ENCODE measurements at regions of chr1 and their contacts with region 1.

Region 1: GRCh38 chr1:179365320-179366092 is at the start of gene AXDND1:
- DNase-seq: peak; percentile 80 to 96 (median 90)
- ATAC-seq: peak; percentile 92
- H3K4me3 ChIP-seq: peak within 1 kb of the TSS; percentile 72 to 73
- H3K4me3 Mint-ChIP-seq: peak within 1 kb of the TSS; percentile 99
- H3K27ac ChIP-seq: peak within 1 kb of the TSS; percentile 92 to 99
- H3K27ac Mint-ChIP-seq: peak within 1 kb of the TSS; percentile 100
- H3K4me1 ChIP-seq: peaks cover 6% of the 10 kb centered on the region
- H3K4me1 Mint-ChIP-seq: peaks cover 12% of the 10 kb centered on the region
- H3K27me3 ChIP-seq: no peaks in the 10 kb centered on the region
- H3K27me3 Mint-ChIP-seq: no peaks in the 10 kb centered on the region
- CTCF ChIP-seq: no peak
- total RNA-seq, gene AXDND1: 0.98 to 1.6 TPM

Region 2: GRCh38 chr1:178542560-178543356 is 822.7 kb before region 1 on chr1:
- CTCF ChIA-PET with region 1: interaction called, 3 read pairs
- POLR2A ChIA-PET with region 1: no interaction called
- intact Hi-C with region 1: loop called (anchors 1 to 5 kb)
- DNase-seq: peak; percentile 68 to 96 (median 85)
- ATAC-seq: peak; percentile 92
- H3K4me3 ChIP-seq: peak overlapping the region; percentile 75 to 92
- H3K4me3 Mint-ChIP-seq: peak overlapping the region; percentile 90
- H3K27ac ChIP-seq: peak overlapping the region in 1 of 2 experiments; percentile 22
- H3K27ac Mint-ChIP-seq: peak overlapping the region; percentile 62
- H3K4me1 ChIP-seq: peaks cover 11% of the 10 kb centered on the region
- H3K4me1 Mint-ChIP-seq: peaks cover 9% of the 10 kb centered on the region
- H3K27me3 ChIP-seq: no peaks in the 10 kb centered on the region
- H3K27me3 Mint-ChIP-seq: no peaks in the 10 kb centered on the region
- CTCF ChIP-seq: peak; percentile 98

Region 3: GRCh38 chr1:178774263-178774662 is 591.2 kb before region 1 on chr1:
- CTCF ChIA-PET with region 1: no interaction called
- POLR2A ChIA-PET with region 1: no interaction called
- intact Hi-C with region 1: loop called in 1 of 2 experiments (anchors 2 kb)
- DNase-seq: peak in 2 of 9 experiments; percentile 19 to 38
- ATAC-seq: no peak
- H3K4me3 ChIP-seq: no peak overlapping the region
- H3K4me3 Mint-ChIP-seq: no peak overlapping the region
- H3K27ac ChIP-seq: no peak overlapping the region
- H3K27ac Mint-ChIP-seq: no peak overlapping the region
- H3K4me1 ChIP-seq: no peaks in the 10 kb centered on the region
- H3K4me1 Mint-ChIP-seq: no peaks in the 10 kb centered on the region
- H3K27me3 ChIP-seq: no peaks in the 10 kb centered on the region
- H3K27me3 Mint-ChIP-seq: no peaks in the 10 kb centered on the region
- CTCF ChIP-seq: peak; percentile 56

Region 4: GRCh38 chr1:179081687-179082332 is 283.7 kb before region 1 on chr1 and contains the start of gene TOR3A:
- CTCF ChIA-PET with region 1: interaction called, 95 read pairs
- POLR2A ChIA-PET with region 1: interaction called, 7 read pairs
- intact Hi-C with region 1: loop called (anchors 1 kb)
- DNase-seq: peak; percentile 43 to 87 (median 75)
- ATAC-seq: peak; percentile 47
- H3K4me3 ChIP-seq: peak within 1 kb of the TSS; percentile 62 to 78
- H3K4me3 Mint-ChIP-seq: peak within 1 kb of the TSS; percentile 98
- H3K27ac ChIP-seq: peak within 1 kb of the TSS; percentile 58 to 74
- H3K27ac Mint-ChIP-seq: peak within 1 kb of the TSS; percentile 97
- H3K4me1 ChIP-seq: peaks cover 20% of the 10 kb centered on the region
- H3K4me1 Mint-ChIP-seq: peaks cover 31% of the 10 kb centered on the region
- H3K27me3 ChIP-seq: no peaks in the 10 kb centered on the region
- H3K27me3 Mint-ChIP-seq: no peaks in the 10 kb centered on the region
- CTCF ChIP-seq: no peak
- total RNA-seq, gene TOR3A: 15.6 to 16.0 TPM

Region 5: DNA sequence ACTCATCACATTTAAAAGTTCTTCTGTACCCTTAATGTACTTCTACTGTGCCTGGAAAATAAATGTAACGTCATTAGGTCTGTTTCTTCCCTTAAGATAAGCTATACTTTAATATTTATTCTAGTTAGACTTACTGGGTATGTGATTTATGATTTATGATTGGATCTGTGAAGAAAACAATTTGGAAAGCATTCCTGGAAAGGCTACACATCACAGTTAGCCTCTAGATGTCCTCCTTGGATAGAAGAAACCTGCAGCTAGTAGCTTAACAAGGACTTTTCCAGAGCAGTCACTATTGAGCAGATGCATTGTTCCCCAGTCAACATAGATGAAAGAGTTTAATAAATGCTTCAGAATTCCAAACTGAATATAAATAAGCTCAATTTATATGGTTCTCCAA is 113.8 kb before region 1 on chr1:
- CTCF ChIA-PET with region 1: interaction called, 38 read pairs
- POLR2A ChIA-PET with region 1: no interaction called
- intact Hi-C with region 1: loop called (anchors 1 to 2 kb)
- DNase-seq: peak in 2 of 9 experiments; percentile 31 to 49
- ATAC-seq: no peak
- H3K4me3 ChIP-seq: no peak overlapping the region
- H3K4me3 Mint-ChIP-seq: no peak overlapping the region
- H3K27ac ChIP-seq: no peak overlapping the region
- H3K27ac Mint-ChIP-seq: no peak overlapping the region
- H3K4me1 ChIP-seq: no peaks in the 10 kb centered on the region
- H3K4me1 Mint-ChIP-seq: no peaks in the 10 kb centered on the region
- H3K27me3 ChIP-seq: no peaks in the 10 kb centered on the region
- H3K27me3 Mint-ChIP-seq: no peaks in the 10 kb centered on the region
- CTCF ChIP-seq: no peak

Region 6: DNA sequence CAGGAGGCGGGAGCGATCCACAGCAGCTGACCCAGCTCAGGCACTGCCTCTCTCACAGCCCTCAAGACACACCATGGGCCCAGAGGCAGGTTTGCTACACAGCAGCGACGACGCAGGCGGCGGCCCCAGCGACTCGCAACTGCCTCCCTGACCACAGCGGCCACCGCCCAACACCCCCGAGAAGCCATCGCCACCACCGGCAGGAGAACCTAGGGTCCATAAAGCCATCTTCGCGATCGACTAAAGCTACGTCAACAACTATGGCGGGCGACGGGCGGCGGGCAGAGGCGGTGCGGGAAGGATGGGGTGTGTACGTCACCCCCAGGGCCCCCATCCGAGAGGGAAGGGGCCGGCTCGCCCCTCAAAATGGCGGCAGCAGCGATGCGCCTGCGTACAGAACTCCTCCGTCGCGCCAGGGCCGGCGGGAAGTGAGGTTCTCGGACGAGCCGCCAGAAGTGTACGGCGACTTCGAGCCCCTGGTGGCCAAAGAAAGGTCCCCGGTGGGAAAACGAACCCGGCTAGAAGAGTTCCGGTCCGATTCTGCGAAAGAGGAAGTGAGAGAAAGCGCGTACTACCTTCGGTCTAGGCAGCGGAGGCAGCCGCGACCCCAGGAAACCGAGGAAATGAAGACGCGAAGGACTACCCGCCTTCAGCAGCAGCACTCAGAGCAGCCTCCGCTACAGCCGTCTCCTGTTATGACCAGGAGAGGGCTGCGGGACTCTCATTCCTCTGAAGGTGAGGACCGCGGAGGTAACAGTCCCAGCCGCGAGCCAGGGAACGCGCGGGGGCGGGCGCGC is 516.9 kb after region 1 on chr1 and contains the start of gene TOR1AIP1:
- CTCF ChIA-PET with region 1: no interaction called
- POLR2A ChIA-PET with region 1: interaction called, 3 read pairs
- intact Hi-C with region 1: loop called (anchors 1 to 5 kb)
- DNase-seq: peak; percentile 95 to 99 (median 97)
- ATAC-seq: peak; percentile 74
- H3K4me3 ChIP-seq: peak within 1 kb of the TSS; percentile 91 to 95
- H3K4me3 Mint-ChIP-seq: peak within 1 kb of the TSS; percentile 94
- H3K27ac ChIP-seq: peak within 1 kb of the TSS; percentile 98 to 99
- H3K27ac Mint-ChIP-seq: peak within 1 kb of the TSS; percentile 100
- H3K4me1 ChIP-seq: peaks cover 37% of the 10 kb centered on the region
- H3K4me1 Mint-ChIP-seq: peaks cover 59% of the 10 kb centered on the region
- H3K27me3 ChIP-seq: no peaks in the 10 kb centered on the region
- H3K27me3 Mint-ChIP-seq: no peaks in the 10 kb centered on the region
- CTCF ChIP-seq: peak; percentile 41
- total RNA-seq, gene TOR1AIP1: 108 to 110 TPM

Measured in CD8-positive, alpha-beta T cell (primary cell).